A673 (cell line): ENCODE measurements at regions of chr1 and their contacts with region 1.

Region 1: DNA sequence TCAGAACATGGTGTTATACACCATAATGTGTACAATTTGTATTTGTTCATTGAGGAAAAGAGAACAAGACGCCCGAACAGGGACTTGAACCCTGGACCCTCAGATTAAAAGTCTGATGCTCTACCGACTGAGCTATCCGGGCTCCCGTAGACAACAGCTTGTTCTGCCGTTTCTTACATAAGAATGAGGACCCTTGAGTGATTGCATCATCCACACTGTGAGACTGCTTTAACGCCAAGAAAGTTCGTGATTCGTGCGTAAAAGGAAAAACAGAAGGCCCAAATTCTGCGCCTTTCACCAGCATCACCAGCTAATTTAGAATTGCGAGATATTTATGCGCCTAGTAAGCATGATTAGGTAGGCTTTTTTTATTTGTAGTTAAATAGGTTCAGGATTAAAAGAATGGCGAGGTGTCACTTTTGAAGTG is 9.2 kb upstream of the MDM4 start:
- DNase-seq: peak; percentile 95
- H3K4me3 ChIP-seq: peak overlapping the region; percentile 59
- H3K27ac ChIP-seq: peak overlapping the region; percentile 97
- H3K4me1 ChIP-seq: peaks cover 24% of the 10 kb centered on the region
- H3K27me3 ChIP-seq: peaks cover 4% of the 10 kb centered on the region
- CTCF ChIP-seq: no peak

Region 2: DNA sequence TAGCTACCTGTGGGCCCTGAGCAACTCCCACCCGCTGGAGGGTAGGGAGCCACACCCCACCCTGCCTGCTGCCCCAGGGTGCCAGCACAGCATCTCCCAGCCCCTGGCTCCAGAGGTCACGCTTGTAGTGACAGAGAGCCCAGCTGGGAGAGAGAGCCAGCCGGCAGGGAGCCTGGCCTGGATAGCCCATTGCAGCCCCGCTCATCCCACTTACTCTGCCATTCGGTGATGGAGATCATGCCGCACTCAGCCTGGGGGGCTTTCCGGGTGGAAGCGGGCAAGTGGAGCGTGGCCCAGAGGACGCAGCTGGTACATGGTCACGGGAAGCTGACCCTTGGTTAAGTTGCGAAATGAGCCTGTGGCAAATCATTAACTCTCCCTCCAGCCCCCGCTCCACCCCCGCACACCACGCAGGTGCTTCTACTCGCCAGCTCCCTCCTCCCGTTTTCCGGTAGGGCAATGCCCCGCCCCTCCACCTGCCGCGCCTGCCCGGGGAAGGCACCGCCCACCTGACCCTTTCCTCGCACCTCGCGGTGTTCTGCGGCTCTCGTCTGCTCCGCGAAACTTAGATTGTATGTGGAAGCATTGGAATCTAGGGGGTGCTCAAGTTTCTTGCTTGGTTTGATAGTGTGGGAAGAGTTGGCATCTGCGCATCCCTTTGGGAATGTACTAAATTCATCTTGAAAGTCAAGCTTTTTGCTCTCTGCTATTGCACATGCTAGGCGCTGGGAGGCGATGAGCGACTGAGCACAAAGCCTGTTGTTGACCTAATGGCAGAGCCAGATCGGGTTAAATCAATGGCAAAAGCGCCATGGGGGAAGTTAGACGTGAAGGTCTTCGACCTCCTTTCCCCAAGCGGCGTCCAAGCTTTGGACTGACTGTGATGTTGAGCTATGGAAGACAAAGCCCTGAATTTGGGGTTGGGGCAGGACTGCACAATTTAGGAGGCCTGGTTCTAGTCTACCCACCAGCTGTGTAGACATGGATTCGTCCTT is 293.0 kb before region 1 on chr1 and contains the start of gene GOLT1A:
- CTCF ChIA-PET with region 1: interaction called, 4 read pairs
- POLR2A ChIA-PET with region 1: no interaction called
- intact Hi-C with region 1: loop called (anchors 5 kb)
- DNase-seq: peak; percentile 87
- H3K4me3 ChIP-seq: peak within 1 kb of the TSS; percentile 21
- H3K27ac ChIP-seq: no peak within 1 kb of the TSS
- H3K4me1 ChIP-seq: peaks cover 7% of the 10 kb centered on the region
- H3K27me3 ChIP-seq: no peaks in the 10 kb centered on the region
- CTCF ChIP-seq: peak; percentile 87
- total RNA-seq, gene GOLT1A: not detected in 2 replicates

Region 3: DNA sequence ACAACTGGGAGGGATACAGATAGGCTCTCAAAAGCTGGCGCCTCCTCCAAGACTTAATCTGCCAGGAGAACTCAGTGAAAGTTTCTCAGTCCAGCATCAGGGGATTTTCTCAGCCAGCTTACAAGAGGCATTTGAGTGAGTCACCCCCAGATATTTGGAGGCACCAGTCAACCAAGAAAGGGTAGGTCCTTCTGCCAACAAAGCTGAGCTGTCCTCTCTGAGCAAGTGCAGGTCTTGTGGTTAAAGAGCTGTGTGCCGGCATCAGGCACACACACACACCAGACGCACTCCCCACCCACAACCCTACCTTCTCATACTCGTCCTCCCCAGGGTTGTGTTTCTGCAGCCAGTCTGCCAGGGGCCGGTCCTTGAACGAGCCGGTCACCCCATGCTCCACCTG is 68.3 kb before region 1 on chr1:
- CTCF ChIA-PET with region 1: interaction called, 19 read pairs
- POLR2A ChIA-PET with region 1: no interaction called
- intact Hi-C with region 1: no loop called
- DNase-seq: no peak
- H3K4me3 ChIP-seq: no peak overlapping the region
- H3K27ac ChIP-seq: no peak overlapping the region
- H3K4me1 ChIP-seq: peaks cover 21% of the 10 kb centered on the region
- H3K27me3 ChIP-seq: no peaks in the 10 kb centered on the region
- CTCF ChIP-seq: no peak

Region 4: GRCh38 chr1:204453141-204453772 is 53.7 kb before region 1 on chr1:
- CTCF ChIA-PET with region 1: interaction called, 71 read pairs
- POLR2A ChIA-PET with region 1: no interaction called
- intact Hi-C with region 1: no loop called
- DNase-seq: peak; percentile 96
- H3K4me3 ChIP-seq: no peak overlapping the region
- H3K27ac ChIP-seq: peak overlapping the region; percentile 0
- H3K4me1 ChIP-seq: peaks cover 71% of the 10 kb centered on the region
- H3K27me3 ChIP-seq: no peaks in the 10 kb centered on the region
- CTCF ChIP-seq: no peak

Region 5: GRCh38 chr1:204494281-204495077 is 12.5 kb before region 1 on chr1 and contains the start of gene PIK3C2B:
- CTCF ChIA-PET with region 1: interaction called, 12 read pairs
- POLR2A ChIA-PET with region 1: interaction called, 6 read pairs
- intact Hi-C with region 1: no loop called
- DNase-seq: peak; percentile 85
- H3K4me3 ChIP-seq: peak within 1 kb of the TSS; percentile 94
- H3K27ac ChIP-seq: peak within 1 kb of the TSS; percentile 83
- H3K4me1 ChIP-seq: peaks cover 21% of the 10 kb centered on the region
- H3K27me3 ChIP-seq: no peaks in the 10 kb centered on the region
- CTCF ChIP-seq: no peak
- total RNA-seq, gene PIK3C2B: 18.0 and 25.5 TPM in 2 replicates